ENCODE measurements at regions of chr10 and their contacts with region 1.

Region 1: GRCh38 chr10:73940634-73941221 is 29.8 kb downstream of the PLAU start:
- DNase-seq: peak; percentile 88
- H3K4me3 Mint-ChIP-seq: peak overlapping the region; percentile 31
- H3K27ac Mint-ChIP-seq: no peak overlapping the region
- H3K4me1 Mint-ChIP-seq: peaks cover 26% of the 10 kb centered on the region
- H3K27me3 Mint-ChIP-seq: peaks cover 7% of the 10 kb centered on the region

Region 2: DNA sequence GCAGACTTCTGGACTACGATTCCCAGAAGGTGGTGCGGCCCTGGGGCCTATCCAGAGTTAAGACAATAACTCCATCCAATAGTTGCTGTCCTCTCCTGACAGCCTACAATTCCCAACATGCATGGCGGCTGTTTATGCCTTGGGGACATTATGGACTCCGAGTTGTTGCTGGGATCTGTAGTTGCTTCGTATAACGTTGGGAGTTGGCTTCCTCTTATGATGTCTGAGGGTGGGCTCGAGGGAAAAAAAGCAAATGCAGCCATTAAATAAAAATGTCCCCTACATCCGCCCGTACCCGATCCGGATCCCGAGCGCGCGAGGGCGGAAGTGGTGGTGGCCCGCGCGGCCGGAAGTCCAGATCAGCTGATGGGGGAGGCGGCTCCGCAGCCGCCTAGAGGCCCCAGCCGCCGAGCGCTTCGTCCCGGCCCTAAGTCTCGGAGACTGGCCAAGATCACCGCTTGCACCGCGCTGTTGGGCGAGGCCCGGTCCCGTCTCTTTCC is 155.5 kb before region 1 on chr10 and contains the start of gene ZSWIM8:
- CTCF ChIA-PET with region 1: no interaction called
- POLR2A ChIA-PET with region 1: no interaction called
- DNase-seq: peak; percentile 87
- H3K4me3 Mint-ChIP-seq: peak within 1 kb of the TSS; percentile 85
- H3K27ac Mint-ChIP-seq: peak within 1 kb of the TSS; percentile 98
- H3K4me1 Mint-ChIP-seq: peaks cover 58% of the 10 kb centered on the region
- H3K27me3 Mint-ChIP-seq: no peaks in the 10 kb centered on the region
- total RNA-seq, gene ZSWIM8: 88.0 to 92.2 TPM

Region 3: GRCh38 chr10:73848821-73849489 is 91.8 kb before region 1 on chr10:
- CTCF ChIA-PET with region 1: interaction called, 22 read pairs
- POLR2A ChIA-PET with region 1: no interaction called
- DNase-seq: peak; percentile 94
- H3K4me3 Mint-ChIP-seq: no peak overlapping the region
- H3K27ac Mint-ChIP-seq: peak overlapping the region; percentile 56
- H3K4me1 Mint-ChIP-seq: peaks cover 22% of the 10 kb centered on the region
- H3K27me3 Mint-ChIP-seq: no peaks in the 10 kb centered on the region

Region 4: DNA sequence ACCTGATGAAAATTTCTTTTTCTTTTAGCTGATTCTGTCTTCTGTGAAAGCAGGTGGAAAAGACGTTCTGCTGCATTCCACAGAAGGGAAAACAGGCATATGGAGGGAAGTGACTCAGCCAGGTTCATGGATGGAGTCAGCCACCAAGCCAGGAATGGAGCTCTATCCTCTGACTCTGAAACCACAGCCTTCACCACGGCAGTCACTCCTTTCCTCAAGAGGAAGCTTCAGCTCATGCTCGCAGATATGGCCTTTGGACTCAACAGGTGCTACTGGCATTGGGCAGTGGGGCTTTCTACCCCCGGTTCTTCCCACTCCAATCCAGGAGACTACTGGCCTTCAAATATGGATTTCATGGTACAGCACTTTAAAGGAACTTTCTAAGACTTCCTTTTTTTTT is 41.3 kb before region 1 on chr10:
- CTCF ChIA-PET with region 1: interaction called, 415 read pairs
- POLR2A ChIA-PET with region 1: interaction called, 5 read pairs
- DNase-seq: no peak
- H3K4me3 Mint-ChIP-seq: no peak overlapping the region
- H3K27ac Mint-ChIP-seq: no peak overlapping the region
- H3K4me1 Mint-ChIP-seq: peaks cover 11% of the 10 kb centered on the region
- H3K27me3 Mint-ChIP-seq: peaks cover 23% of the 10 kb centered on the region

Region 5: GRCh38 chr10:73956476-73957359 is 16.0 kb after region 1 on chr10:
- CTCF ChIA-PET with region 1: interaction called, 40 read pairs
- POLR2A ChIA-PET with region 1: interaction called, 5 read pairs
- DNase-seq: peak; percentile 59
- H3K4me3 Mint-ChIP-seq: peak overlapping the region; percentile 66
- H3K27ac Mint-ChIP-seq: peak overlapping the region; percentile 97
- H3K4me1 Mint-ChIP-seq: peaks cover 54% of the 10 kb centered on the region
- H3K27me3 Mint-ChIP-seq: no peaks in the 10 kb centered on the region

Region 6: GRCh38 chr10:73991884-73992245 is 51.1 kb after region 1 on chr10:
- CTCF ChIA-PET with region 1: interaction called, 12 read pairs
- POLR2A ChIA-PET with region 1: interaction called, 3 read pairs
- DNase-seq: peak; percentile 93
- H3K4me3 Mint-ChIP-seq: peak overlapping the region; percentile 24
- H3K27ac Mint-ChIP-seq: peak overlapping the region; percentile 84
- H3K4me1 Mint-ChIP-seq: peaks cover 57% of the 10 kb centered on the region
- H3K27me3 Mint-ChIP-seq: no peaks in the 10 kb centered on the region

Region 7: DNA sequence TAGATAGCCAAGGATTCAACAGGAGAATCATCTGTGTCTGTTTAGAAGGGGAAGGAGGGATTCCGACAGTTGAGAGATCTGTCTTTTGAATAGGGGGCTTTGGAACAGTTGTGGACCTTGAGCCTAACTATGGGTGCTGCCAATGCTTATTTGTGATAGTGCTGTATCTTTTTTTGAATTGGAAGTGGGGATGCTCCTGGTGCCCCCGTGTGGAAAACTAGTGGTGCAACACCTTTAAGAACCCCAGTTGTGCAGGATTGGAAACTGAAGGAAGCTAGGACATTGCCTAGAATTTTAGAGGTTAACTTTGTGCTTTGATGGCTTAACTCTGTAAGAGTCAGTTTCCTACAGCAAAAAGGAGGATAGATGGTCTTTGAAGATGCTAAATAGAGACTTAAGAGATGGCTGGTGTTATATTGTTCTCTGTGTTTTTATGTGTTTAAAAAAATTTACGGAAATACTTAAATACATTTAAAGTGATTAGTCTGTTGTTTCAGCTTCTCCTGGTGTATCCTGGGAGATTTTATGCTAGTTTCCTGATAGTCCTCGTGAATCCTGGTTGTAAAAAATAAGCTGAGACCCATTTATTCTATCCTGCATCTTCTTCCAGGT is 140.6 kb after region 1 on chr10:
- CTCF ChIA-PET with region 1: interaction called, 30 read pairs
- POLR2A ChIA-PET with region 1: no interaction called
- DNase-seq: peak; percentile 45
- H3K4me3 Mint-ChIP-seq: no peak overlapping the region
- H3K27ac Mint-ChIP-seq: no peak overlapping the region
- H3K4me1 Mint-ChIP-seq: peaks cover 57% of the 10 kb centered on the region
- H3K27me3 Mint-ChIP-seq: no peaks in the 10 kb centered on the region

Measured in activated CD4-positive, alpha-beta memory T cell treated with anti-CD3 and anti-CD28 coated beads, Interleukin-2, amount 10 ng/mL, durations not matched to agents 7 days and 5 days (primary cell).